A673 (cell line): ENCODE measurements at regions of chr21 and their contacts with region 1.

Region 1: GRCh38 chr21:41975406-41976272 is 21.8 kb upstream of the C2CD2 start:
- DNase-seq: no peak
- H3K4me3 ChIP-seq: no peak overlapping the region
- H3K27ac ChIP-seq: no peak overlapping the region
- H3K4me1 ChIP-seq: no peaks in the 10 kb centered on the region
- H3K27me3 ChIP-seq: no peaks in the 10 kb centered on the region
- CTCF ChIP-seq: no peak

Region 2: GRCh38 chr21:41863439-41863740 is 112.2 kb before region 1 on chr21:
- CTCF ChIA-PET with region 1: no interaction called
- POLR2A ChIA-PET with region 1: interaction called, 11 read pairs
- intact Hi-C with region 1: no loop called
- DNase-seq: no peak
- H3K4me3 ChIP-seq: no peak overlapping the region
- H3K27ac ChIP-seq: no peak overlapping the region
- H3K4me1 ChIP-seq: no peaks in the 10 kb centered on the region
- H3K27me3 ChIP-seq: no peaks in the 10 kb centered on the region
- CTCF ChIP-seq: no peak

Region 3: DNA sequence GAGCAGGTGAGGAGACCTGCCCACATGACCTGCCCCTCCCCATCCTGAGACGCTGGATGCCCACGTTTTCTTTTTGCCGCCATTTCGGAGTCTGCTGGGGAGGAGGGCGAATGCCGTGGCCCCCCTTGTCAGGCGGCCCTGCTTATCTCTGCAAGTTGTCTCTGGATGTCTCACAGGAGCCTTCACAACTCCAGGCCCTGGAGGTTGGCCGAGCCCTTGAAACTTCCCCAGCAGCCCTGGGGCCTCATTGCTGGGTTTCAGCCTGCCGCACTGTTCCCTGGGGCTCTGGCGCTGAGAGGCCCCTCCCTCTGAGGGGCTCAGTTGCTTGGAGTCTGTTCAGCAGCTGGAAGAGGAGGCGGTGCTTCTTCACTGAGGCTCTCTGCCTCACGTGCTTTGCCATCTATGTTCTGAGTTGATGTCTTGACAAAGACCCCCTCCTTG is 64.3 kb after region 1 on chr21:
- CTCF ChIA-PET with region 1: no interaction called
- POLR2A ChIA-PET with region 1: no interaction called
- intact Hi-C with region 1: no loop called
- DNase-seq: peak; percentile 12
- H3K4me3 ChIP-seq: no peak overlapping the region
- H3K27ac ChIP-seq: no peak overlapping the region
- H3K4me1 ChIP-seq: peaks cover 7% of the 10 kb centered on the region
- H3K27me3 ChIP-seq: no peaks in the 10 kb centered on the region
- CTCF ChIP-seq: no peak

Region 4: GRCh38 chr21:42233067-42233961 is 257.7 kb after region 1 on chr21:
- CTCF ChIA-PET with region 1: no interaction called
- POLR2A ChIA-PET with region 1: no interaction called
- intact Hi-C with region 1: no loop called
- DNase-seq: no peak
- H3K4me3 ChIP-seq: no peak overlapping the region
- H3K27ac ChIP-seq: no peak overlapping the region
- H3K4me1 ChIP-seq: peaks cover 37% of the 10 kb centered on the region
- H3K27me3 ChIP-seq: no peaks in the 10 kb centered on the region
- CTCF ChIP-seq: no peak